Lower leg skin (tissue), 4 donors: ENCODE measurements at regions of chr14 and their contacts with region 1.

Region 1: DNA sequence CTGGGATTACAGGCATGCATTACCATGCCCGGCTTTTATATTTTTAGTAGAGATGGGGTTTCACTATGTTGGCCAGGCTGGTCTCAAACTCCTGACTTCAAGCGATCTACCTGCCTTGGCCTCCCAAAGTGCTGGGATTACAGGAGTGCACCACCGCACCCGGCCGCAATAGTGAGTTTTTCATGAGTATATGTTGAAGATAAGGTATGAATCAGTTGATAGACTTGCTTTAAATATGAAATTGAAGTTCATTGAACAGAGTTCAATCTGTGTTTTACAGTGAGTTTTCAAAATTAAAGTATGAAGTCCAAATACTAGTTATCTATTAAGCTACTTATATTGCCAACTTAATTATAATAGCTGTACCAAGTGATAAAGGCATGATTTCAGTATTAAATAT is 35.1 kb downstream of the SNAPC1 start:
- DNase-seq: no peak
- H3K4me3 ChIP-seq: no peak overlapping the region
- CTCF ChIP-seq: no peak
- POLR2A ChIP-seq: no peak

Region 2: DNA sequence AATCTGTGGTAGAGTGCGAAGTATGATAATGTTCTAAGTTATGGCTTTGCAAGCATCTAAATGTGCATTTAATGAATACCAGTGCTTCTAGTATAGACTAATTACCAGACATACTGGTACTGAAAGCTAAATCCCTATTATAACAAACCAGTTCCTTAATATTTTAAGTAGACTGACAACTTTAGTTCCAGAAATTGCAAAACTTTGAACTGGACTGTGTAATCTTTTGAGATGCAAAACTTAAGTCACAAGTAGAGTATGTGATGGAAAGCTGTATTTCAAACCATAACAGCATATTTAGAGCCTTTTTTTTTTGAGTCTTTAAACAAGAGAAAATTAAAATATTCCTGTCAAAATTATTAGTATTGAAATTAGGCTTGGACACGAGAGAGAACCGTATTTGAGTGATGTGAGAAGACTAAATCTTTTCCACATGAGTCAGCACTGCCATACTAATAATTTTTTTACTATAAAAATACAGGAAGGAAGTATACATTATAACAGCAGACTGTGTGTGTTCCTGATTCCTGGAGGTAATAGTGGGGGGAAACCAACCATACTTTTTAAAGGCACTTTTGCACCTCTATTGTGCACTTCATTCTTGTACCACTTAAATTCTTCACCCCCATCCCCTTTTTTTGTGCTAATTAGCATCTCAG is 1502.8 kb before region 1 on chr14:
- intact Hi-C with region 1: loop called (anchors 10 kb)
- DNase-seq: no peak
- H3K4me3 ChIP-seq: no peak overlapping the region
- CTCF ChIP-seq: no peak
- POLR2A ChIP-seq: no peak